OCI-LY7 (cell line): ENCODE measurements at regions of chr12 and their contacts with region 1.

Region 1: DNA sequence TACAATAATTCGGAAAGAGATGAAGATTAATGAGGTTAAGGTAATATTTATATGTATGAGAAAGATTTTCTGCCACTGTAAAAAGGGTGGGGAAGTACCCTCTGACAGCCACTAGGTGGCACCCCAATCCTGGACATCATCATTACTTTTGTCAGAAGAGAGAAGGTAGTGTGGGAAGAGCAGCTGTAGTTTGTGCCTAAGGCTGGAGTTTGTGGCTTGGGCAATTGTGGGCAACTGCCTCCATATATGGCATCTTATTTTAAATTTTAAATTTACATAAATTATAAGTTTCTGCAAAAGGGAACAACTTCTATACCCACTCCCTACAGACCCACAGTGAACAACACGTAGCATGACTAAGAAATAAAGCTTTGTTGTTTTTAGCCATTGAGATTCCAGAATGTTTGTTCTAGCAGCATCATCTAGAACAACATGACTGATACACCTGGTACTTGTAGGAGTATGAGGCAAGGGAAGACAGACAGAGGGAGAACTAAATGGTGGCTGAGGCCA is 34.4 kb upstream of the SYCP3 start:
- DNase-seq: peak; percentile 78
- H3K4me3 ChIP-seq: no peak overlapping the region
- H3K27ac ChIP-seq: peak overlapping the region; percentile 95
- H3K4me1 ChIP-seq: peaks cover 51% of the 10 kb centered on the region
- CTCF ChIP-seq: peak; percentile 98

Region 2: GRCh38 chr12:101490286-101490920 is 283.3 kb before region 1 on chr12:
- CTCF ChIA-PET with region 1: no interaction called
- POLR2A ChIA-PET with region 1: no interaction called
- intact Hi-C with region 1: loop called (anchors 1 kb)
- DNase-seq: peak; percentile 61
- H3K4me3 ChIP-seq: no peak overlapping the region
- H3K27ac ChIP-seq: no peak overlapping the region
- H3K4me1 ChIP-seq: peaks cover 8% of the 10 kb centered on the region
- CTCF ChIP-seq: peak; percentile 83

Region 3: GRCh38 chr12:101823891-101824290 is 50.2 kb after region 1 on chr12:
- CTCF ChIA-PET with region 1: interaction called, 34 read pairs
- POLR2A ChIA-PET with region 1: interaction called, 75 read pairs
- intact Hi-C with region 1: no loop called
- DNase-seq: peak; percentile 93
- H3K4me3 ChIP-seq: peak overlapping the region; percentile 31
- H3K27ac ChIP-seq: peak overlapping the region; percentile 60
- H3K4me1 ChIP-seq: peaks cover 67% of the 10 kb centered on the region
- CTCF ChIP-seq: peak; percentile 66

Region 4: GRCh38 chr12:101839324-101840283 is 65.9 kb after region 1 on chr12:
- CTCF ChIA-PET with region 1: interaction called, 7 read pairs
- POLR2A ChIA-PET with region 1: interaction called, 10 read pairs
- intact Hi-C with region 1: loop called (anchors 1 kb)
- DNase-seq: peak; percentile 75
- H3K4me3 ChIP-seq: no peak overlapping the region
- H3K27ac ChIP-seq: peak overlapping the region; percentile 43
- H3K4me1 ChIP-seq: peaks cover 28% of the 10 kb centered on the region
- CTCF ChIP-seq: peak; percentile 93

Region 5: DNA sequence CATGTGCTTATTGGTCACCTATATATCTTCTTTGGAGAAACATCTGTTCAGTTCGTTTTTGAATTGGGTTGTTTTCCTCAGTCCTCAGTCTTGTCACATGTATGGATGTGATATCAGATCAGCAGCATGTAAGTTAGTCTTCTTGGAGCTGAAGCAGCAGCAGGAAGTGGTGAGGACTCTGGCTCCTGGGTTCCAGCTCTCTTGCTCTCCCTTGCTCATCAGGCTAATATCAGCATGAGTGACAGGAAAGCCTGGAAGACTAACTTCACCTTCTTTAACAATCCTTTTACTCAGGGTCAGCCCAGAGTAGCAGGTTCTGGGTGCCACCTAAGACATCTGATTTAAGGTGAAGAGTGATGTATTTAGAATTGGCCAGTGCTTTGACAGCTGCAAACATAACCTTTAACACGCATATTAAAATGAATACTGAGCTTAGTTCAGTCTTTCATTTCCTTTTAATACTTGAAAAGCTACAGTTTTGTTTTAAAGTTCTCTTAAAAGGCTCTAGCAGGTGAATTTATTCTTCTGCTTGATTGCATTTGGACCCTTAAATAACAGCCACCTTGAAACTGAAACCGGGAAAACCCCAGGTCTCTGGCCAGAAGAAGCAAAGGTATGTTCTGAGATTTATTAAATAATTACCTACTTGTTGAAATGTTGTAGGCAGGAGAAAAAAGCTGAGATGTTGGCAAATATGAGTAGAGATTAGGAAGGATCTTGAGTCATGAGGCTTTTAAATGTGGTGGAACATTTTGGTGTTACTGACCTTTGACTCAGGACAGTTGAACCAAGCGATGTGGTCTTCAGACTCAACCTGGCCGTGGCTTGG is 158.0 kb after region 1 on chr12:
- CTCF ChIA-PET with region 1: no interaction called
- POLR2A ChIA-PET with region 1: interaction called, 6 read pairs
- intact Hi-C with region 1: loop called (anchors 2 kb)
- DNase-seq: peak; percentile 72
- H3K4me3 ChIP-seq: peak overlapping the region; percentile 49
- H3K27ac ChIP-seq: peak overlapping the region; percentile 86
- H3K4me1 ChIP-seq: peaks cover 75% of the 10 kb centered on the region
- CTCF ChIP-seq: no peak

Region 6: DNA sequence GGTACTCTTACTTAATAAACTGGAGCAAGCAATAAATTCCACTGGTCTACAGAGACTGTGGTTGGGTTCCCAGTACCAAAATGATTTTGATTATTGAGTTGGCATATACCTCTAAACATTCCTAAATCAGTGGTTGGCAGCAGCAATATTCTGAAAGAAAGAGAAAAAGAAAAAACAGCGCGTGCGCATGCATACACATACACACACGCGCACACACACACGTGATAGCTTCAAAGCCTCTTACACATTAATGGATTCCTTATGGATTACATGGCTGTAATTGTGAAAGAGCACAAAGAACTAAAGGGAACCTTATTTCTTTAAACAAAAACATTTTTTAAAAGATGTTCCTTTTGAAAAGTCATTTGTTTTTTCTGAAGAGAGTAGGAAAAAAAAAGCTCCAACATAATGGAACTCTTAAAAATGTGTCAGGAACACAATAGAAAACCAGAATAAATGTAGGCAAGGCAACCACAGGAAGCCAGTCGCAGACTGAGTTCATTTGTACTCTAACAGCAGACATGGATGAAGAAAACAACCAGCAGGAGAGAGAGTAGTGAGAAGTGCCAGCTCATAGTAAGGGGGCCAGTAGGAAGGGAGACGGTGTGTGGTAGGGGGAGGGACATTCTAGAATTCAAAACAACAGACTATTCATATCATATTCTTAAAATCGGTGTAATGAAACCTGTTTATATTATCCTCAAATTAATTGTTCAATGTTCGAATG is 183.7 kb after region 1 on chr12:
- CTCF ChIA-PET with region 1: no interaction called
- POLR2A ChIA-PET with region 1: no interaction called
- intact Hi-C with region 1: no loop called
- DNase-seq: no peak
- H3K4me3 ChIP-seq: no peak overlapping the region
- H3K27ac ChIP-seq: no peak overlapping the region
- H3K4me1 ChIP-seq: no peaks in the 10 kb centered on the region
- CTCF ChIP-seq: no peak

Region 7: GRCh38 chr12:101967506-101967905 is 193.8 kb after region 1 on chr12:
- CTCF ChIA-PET with region 1: no interaction called
- POLR2A ChIA-PET with region 1: no interaction called
- intact Hi-C with region 1: no loop called
- DNase-seq: no peak
- H3K4me3 ChIP-seq: no peak overlapping the region
- H3K27ac ChIP-seq: no peak overlapping the region
- H3K4me1 ChIP-seq: peaks cover 5% of the 10 kb centered on the region
- CTCF ChIP-seq: no peak

Region 8: GRCh38 chr12:102484428-102484958 is 710.8 kb after region 1 on chr12:
- CTCF ChIA-PET with region 1: no interaction called
- POLR2A ChIA-PET with region 1: no interaction called
- intact Hi-C with region 1: loop called (anchors 10 kb)
- DNase-seq: peak; percentile 59
- H3K4me3 ChIP-seq: no peak overlapping the region
- H3K27ac ChIP-seq: no peak overlapping the region
- H3K4me1 ChIP-seq: peaks cover 12% of the 10 kb centered on the region
- CTCF ChIP-seq: peak; percentile 96